Motor neuron (in vitro differentiated cells): ENCODE measurements at regions of chr7 and their contacts with region 1.

Region 1: GRCh38 chr7:23712368-23713284 is 2.6 kb downstream of the STK31 start:
- ATAC-seq: peak in 6 of 8 experiments; percentile 7 to 43 (median 30)
- H3K4me3 ChIP-seq: no peak overlapping the region
- H3K27ac ChIP-seq: no peak overlapping the region
- H3K4me1 ChIP-seq: no peaks in the 10 kb centered on the region

Region 2: DNA sequence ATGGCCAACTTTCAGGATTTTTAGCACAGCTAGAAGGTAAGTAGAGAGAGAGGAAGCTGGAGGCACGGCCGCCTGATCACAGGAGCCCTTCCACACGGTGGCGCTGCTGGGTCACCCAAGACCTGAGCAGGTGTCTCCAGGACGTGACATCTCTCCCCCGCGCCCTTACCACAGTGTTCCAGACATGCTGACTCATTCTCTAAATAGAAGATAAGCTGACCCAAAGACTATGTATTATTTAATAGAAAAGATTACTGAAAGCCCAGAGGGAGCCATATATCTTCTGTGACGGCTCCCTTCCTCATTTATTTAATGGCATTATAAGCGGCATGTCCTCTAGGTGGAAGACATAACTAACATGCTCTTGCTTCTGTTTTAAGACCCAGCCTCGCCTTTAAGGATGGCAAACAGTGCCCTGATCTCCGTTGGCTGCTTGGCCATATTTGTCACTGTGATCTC is 439.5 kb before region 1 on chr7:
- in situ Hi-C with region 1: loop called in 1 of 9 experiments (anchors 25 kb)
- ATAC-seq: peak; percentile 67 to 99 (median 96)
- H3K4me3 ChIP-seq: no peak overlapping the region
- H3K27ac ChIP-seq: no peak overlapping the region
- H3K4me1 ChIP-seq: peaks cover 0 to 2% of the 10 kb centered on the region in 2 donors